Activated CD4-positive, alpha-beta memory T cell treated with anti-CD3 and anti-CD28 coated beads, Interleukin-2, amount 10 ng/mL, durations not matched to agents 7 days and 5 days (primary cell): ENCODE measurements at regions of chr1 and their contacts with region 1.

Region 1: GRCh38 chr1:146012737-146013403 is 8.7 kb downstream of the HJV start:
- DNase-seq: peak; percentile 62
- H3K4me3 Mint-ChIP-seq: no peak overlapping the region
- H3K27ac Mint-ChIP-seq: no peak overlapping the region
- H3K4me1 Mint-ChIP-seq: peaks cover 11% of the 10 kb centered on the region
- H3K27me3 Mint-ChIP-seq: peaks cover 20% of the 10 kb centered on the region

Region 2: GRCh38 chr1:145891587-145892485 is 121.0 kb before region 1 on chr1:
- CTCF ChIA-PET with region 1: interaction called, 16 read pairs
- POLR2A ChIA-PET with region 1: no interaction called
- DNase-seq: peak; percentile 66
- H3K4me3 Mint-ChIP-seq: no peak overlapping the region
- H3K27ac Mint-ChIP-seq: no peak overlapping the region
- H3K4me1 Mint-ChIP-seq: peaks cover under 1% of the 10 kb centered on the region
- H3K27me3 Mint-ChIP-seq: peaks cover 2% of the 10 kb centered on the region

Region 3: GRCh38 chr1:145996433-145997015 is 16.3 kb before region 1 on chr1 and contains the start of gene TXNIP:
- CTCF ChIA-PET with region 1: interaction called, 4 read pairs
- POLR2A ChIA-PET with region 1: interaction called, 146 read pairs
- DNase-seq: peak; percentile 96
- H3K4me3 Mint-ChIP-seq: peak within 1 kb of the TSS; percentile 93
- H3K27ac Mint-ChIP-seq: peak within 1 kb of the TSS; percentile 97
- H3K4me1 Mint-ChIP-seq: peaks cover 63% of the 10 kb centered on the region
- H3K27me3 Mint-ChIP-seq: no peaks in the 10 kb centered on the region
- total RNA-seq, gene TXNIP: 397 to 407 TPM